ENCODE measurements at regions of chr20 and their contacts with region 1.

Region 1: DNA sequence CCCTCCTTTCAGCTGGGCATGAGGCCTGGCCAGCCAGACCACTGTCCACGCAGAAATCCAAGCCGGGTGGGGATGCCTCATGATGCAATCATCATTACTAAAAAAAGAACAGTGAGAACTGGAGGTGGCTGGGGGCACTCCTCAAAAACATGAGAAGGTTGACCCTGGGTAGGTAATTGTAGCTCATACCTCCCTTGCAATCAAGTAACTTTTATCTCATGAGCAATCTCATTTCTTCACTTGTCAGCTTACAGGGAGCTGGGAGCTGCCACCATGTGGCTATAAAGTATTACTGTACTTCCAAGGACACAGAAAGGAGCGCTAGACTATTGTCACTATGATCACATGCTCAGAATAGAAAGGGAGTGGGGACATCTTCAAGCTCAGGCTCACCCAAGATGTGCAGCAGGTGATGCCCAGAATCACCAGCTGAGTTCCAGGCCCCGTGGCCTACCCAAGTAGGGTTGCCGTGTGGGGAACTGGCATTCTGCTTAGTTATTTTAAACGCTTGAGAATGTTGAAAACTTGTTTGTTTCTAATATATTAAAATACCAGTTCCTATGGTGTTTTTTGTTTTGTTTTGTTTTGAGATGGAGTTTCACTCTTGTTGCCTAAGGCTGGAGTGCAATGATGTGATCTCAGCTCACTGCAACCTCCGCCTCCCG is 3.0 kb upstream of the CDH26 start:
- DNase-seq: peak; percentile 72 to 77
- H3K4me3 ChIP-seq: no peak overlapping the region
- H3K4me3 Mint-ChIP-seq: no peak overlapping the region
- H3K27ac Mint-ChIP-seq: no peak overlapping the region
- H3K4me1 ChIP-seq: peaks cover 33% of the 10 kb centered on the region
- H3K4me1 Mint-ChIP-seq: peaks cover 29% of the 10 kb centered on the region
- H3K27me3 ChIP-seq: no peaks in the 10 kb centered on the region
- H3K27me3 Mint-ChIP-seq: no peaks in the 10 kb centered on the region
- CTCF ChIP-seq: peak; percentile 87 to 89

Region 2: GRCh38 chr20:59782986-59783640 is 172.2 kb before region 1 on chr20:
- CTCF ChIA-PET with region 1: interaction called, 12 read pairs
- POLR2A ChIA-PET with region 1: no interaction called
- intact Hi-C with region 1: loop called (anchors 1 kb)
- DNase-seq: peak; percentile 86 to 88
- H3K4me3 ChIP-seq: no peak overlapping the region
- H3K4me3 Mint-ChIP-seq: no peak overlapping the region
- H3K27ac Mint-ChIP-seq: no peak overlapping the region
- H3K4me1 ChIP-seq: 0 out of 2 replicates have a peak, but pooled peaks cover 3% of the 10 kb centered on the region
- H3K4me1 Mint-ChIP-seq: peaks cover 7% of the 10 kb centered on the region
- H3K27me3 ChIP-seq: no peaks in the 10 kb centered on the region
- H3K27me3 Mint-ChIP-seq: peaks cover 8% of the 10 kb centered on the region
- CTCF ChIP-seq: peak; percentile 99 to 100

Region 3: GRCh38 chr20:59933849-59934596 is 21.2 kb before region 1 on chr20:
- CTCF ChIA-PET with region 1: interaction called, 26 read pairs
- POLR2A ChIA-PET with region 1: interaction called, 5 read pairs
- intact Hi-C with region 1: no loop called
- DNase-seq: peak; percentile 94 to 99
- H3K4me3 ChIP-seq: peak overlapping the region; percentile 73
- H3K4me3 Mint-ChIP-seq: peak overlapping the region; percentile 84
- H3K27ac Mint-ChIP-seq: peak overlapping the region; percentile 59
- H3K4me1 ChIP-seq: peaks cover 21% of the 10 kb centered on the region
- H3K4me1 Mint-ChIP-seq: peaks cover 30% of the 10 kb centered on the region
- H3K27me3 ChIP-seq: no peaks in the 10 kb centered on the region
- H3K27me3 Mint-ChIP-seq: no peaks in the 10 kb centered on the region
- CTCF ChIP-seq: peak; percentile 98 to 100

Region 4: DNA sequence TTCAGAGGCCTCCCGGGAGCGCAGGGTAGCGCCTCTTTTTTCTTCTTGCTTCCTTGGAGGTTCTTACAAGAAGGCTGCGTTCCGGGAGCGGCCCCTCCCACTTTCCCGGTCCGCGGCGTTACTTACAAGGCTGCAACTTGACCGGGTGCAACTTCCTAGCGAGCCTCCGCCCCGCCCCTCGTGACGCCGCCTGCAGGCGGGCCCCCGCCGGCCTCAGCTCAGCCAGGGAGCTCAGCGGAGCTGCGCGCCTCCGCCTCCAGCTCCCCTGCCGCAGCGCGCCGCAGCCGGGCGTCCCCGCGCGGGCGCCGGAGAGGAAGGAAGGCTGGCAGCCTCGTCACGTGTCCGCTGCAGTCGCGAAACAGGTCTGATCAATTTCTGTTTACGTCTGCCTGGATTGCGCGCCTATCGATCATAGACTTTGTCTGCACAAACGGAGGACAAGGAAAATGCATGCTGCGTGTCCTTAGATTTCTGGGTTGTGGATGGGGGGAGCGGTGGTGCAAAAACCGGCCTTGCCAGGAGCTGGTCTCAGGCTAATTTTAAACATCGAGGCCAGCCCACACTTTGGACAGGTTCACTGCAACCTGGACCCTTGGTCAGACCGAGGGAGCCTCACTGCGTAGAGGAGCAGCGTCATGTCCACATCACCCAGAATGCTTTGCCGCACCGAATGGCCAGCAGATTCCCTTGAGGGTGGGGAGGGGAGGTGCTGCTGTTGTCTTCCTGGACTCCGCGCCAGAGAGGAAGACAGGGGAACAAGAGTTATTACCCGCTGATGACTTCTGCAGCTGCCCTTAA is 14.9 kb before region 1 on chr20 and contains the starts of genes FAM217B and PPP1R3D:
- CTCF ChIA-PET with region 1: interaction called, 31 read pairs
- POLR2A ChIA-PET with region 1: interaction called, 14 read pairs
- intact Hi-C with region 1: loop called (anchors 1 kb)
- DNase-seq: peak; percentile 99 to 100
- H3K4me3 ChIP-seq: peak within 1 kb of the TSS; percentile 75
- H3K4me3 Mint-ChIP-seq: peak within 1 kb of the TSS; percentile 99
- H3K27ac Mint-ChIP-seq: peak within 1 kb of the TSS; percentile 97
- H3K4me1 ChIP-seq: peaks cover 13% of the 10 kb centered on the region
- H3K4me1 Mint-ChIP-seq: peaks cover 23% of the 10 kb centered on the region
- H3K27me3 ChIP-seq: no peaks in the 10 kb centered on the region
- H3K27me3 Mint-ChIP-seq: no peaks in the 10 kb centered on the region
- CTCF ChIP-seq: peak; percentile 41 to 50
- total RNA-seq, gene FAM217B: 60.3 and 65.3 TPM in 2 replicates
- total RNA-seq, gene PPP1R3D: 10.4 TPM in 2 replicates

Region 5: GRCh38 chr20:60009826-60010616 is 54.8 kb after region 1 on chr20:
- CTCF ChIA-PET with region 1: interaction called, 10 read pairs
- POLR2A ChIA-PET with region 1: interaction called, 4 read pairs
- intact Hi-C with region 1: no loop called
- DNase-seq: peak in 1 of 2 experiments; percentile 33
- H3K4me3 ChIP-seq: no peak overlapping the region
- H3K4me3 Mint-ChIP-seq: no peak overlapping the region
- H3K27ac Mint-ChIP-seq: no peak overlapping the region
- H3K4me1 ChIP-seq: no peaks in the 10 kb centered on the region
- H3K4me1 Mint-ChIP-seq: no peaks in the 10 kb centered on the region
- H3K27me3 ChIP-seq: no peaks in the 10 kb centered on the region
- H3K27me3 Mint-ChIP-seq: no peaks in the 10 kb centered on the region
- CTCF ChIP-seq: peak in 1 of 2 experiments; percentile 16

Region 6: GRCh38 chr20:60050158-60050947 is 95.1 kb after region 1 on chr20:
- CTCF ChIA-PET with region 1: interaction called, 14 read pairs
- POLR2A ChIA-PET with region 1: no interaction called
- intact Hi-C with region 1: no loop called
- DNase-seq: peak; percentile 86 to 90
- H3K4me3 ChIP-seq: no peak overlapping the region
- H3K4me3 Mint-ChIP-seq: no peak overlapping the region
- H3K27ac Mint-ChIP-seq: no peak overlapping the region
- H3K4me1 ChIP-seq: peaks cover 8% of the 10 kb centered on the region
- H3K4me1 Mint-ChIP-seq: peaks cover 24% of the 10 kb centered on the region
- H3K27me3 ChIP-seq: no peaks in the 10 kb centered on the region
- H3K27me3 Mint-ChIP-seq: peaks cover 3% of the 10 kb centered on the region
- CTCF ChIP-seq: peak; percentile 94 to 98

Region 7: GRCh38 chr20:60057123-60057801 is 102.0 kb after region 1 on chr20:
- CTCF ChIA-PET with region 1: interaction called, 16 read pairs
- POLR2A ChIA-PET with region 1: no interaction called
- intact Hi-C with region 1: no loop called
- DNase-seq: peak; percentile 80 to 86
- H3K4me3 ChIP-seq: no peak overlapping the region
- H3K4me3 Mint-ChIP-seq: no peak overlapping the region
- H3K27ac Mint-ChIP-seq: no peak overlapping the region
- H3K4me1 ChIP-seq: peaks cover 8% of the 10 kb centered on the region
- H3K4me1 Mint-ChIP-seq: peaks cover 9% of the 10 kb centered on the region
- H3K27me3 ChIP-seq: no peaks in the 10 kb centered on the region
- H3K27me3 Mint-ChIP-seq: no peaks in the 10 kb centered on the region
- CTCF ChIP-seq: peak; percentile 97 to 98

Region 8: DNA sequence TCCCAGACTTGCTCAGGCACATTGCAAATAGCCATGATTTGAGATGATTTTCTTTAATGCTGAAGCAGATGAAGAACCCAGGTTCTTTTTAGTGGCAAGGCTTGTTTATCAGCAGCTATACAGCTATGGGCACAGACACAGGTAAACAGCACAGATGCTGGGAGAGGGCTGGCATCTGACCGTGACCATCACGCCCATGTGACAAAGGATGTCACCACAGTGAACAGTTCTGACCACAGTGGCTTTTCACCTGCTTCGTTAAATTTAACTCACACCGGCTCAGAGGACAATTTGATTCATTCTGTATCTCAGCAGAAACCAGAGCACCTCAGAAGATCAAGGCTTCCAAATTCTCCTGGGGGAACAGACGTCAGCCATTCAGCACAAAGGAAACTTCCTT is 145.5 kb after region 1 on chr20:
- CTCF ChIA-PET with region 1: no interaction called
- POLR2A ChIA-PET with region 1: no interaction called
- intact Hi-C with region 1: no loop called
- DNase-seq: no peak
- H3K4me3 ChIP-seq: no peak overlapping the region
- H3K4me3 Mint-ChIP-seq: no peak overlapping the region
- H3K27ac Mint-ChIP-seq: no peak overlapping the region
- H3K4me1 ChIP-seq: no peaks in the 10 kb centered on the region
- H3K4me1 Mint-ChIP-seq: no peaks in the 10 kb centered on the region
- H3K27me3 ChIP-seq: 0 out of 2 replicates have a peak, but pooled peaks cover 1% of the 10 kb centered on the region
- H3K27me3 Mint-ChIP-seq: peaks cover 14% of the 10 kb centered on the region
- CTCF ChIP-seq: no peak

Region 9: DNA sequence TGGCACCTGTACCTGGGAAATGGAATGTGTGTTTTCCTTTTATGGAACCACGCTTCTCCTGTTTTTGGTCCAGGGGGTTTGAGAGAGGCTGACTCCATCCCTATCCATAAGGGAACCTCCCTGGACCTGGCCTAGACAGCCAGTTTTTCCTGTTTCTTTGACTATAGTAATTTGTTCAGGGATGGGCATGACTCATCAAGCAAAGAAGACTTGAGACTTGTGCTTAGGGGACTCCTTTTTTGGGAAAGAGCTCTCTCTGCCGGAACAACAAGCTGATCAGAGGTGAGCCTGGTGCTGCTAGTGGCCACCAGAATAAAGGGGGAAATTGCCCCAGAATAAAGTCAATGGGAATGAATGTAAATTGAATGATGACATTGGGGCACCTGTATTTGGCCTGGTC is 396.8 kb after region 1 on chr20:
- CTCF ChIA-PET with region 1: no interaction called
- POLR2A ChIA-PET with region 1: no interaction called
- intact Hi-C with region 1: no loop called
- DNase-seq: no peak
- H3K4me3 ChIP-seq: no peak overlapping the region
- H3K4me3 Mint-ChIP-seq: no peak overlapping the region
- H3K27ac Mint-ChIP-seq: no peak overlapping the region
- H3K4me1 ChIP-seq: no peaks in the 10 kb centered on the region
- H3K4me1 Mint-ChIP-seq: no peaks in the 10 kb centered on the region
- H3K27me3 ChIP-seq: no peaks in the 10 kb centered on the region
- H3K27me3 Mint-ChIP-seq: peaks cover 6% of the 10 kb centered on the region
- CTCF ChIP-seq: no peak